ENCODE measurements at regions of chr1 and their contacts with region 1.

Region 1: GRCh38 chr1:154992721-154993571 is 440 bp upstream of the LENEP start:
- DNase-seq: no peak
- H3K4me3 ChIP-seq: no peak overlapping the region
- H3K4me3 Mint-ChIP-seq: no peak overlapping the region
- H3K27ac ChIP-seq: no peak overlapping the region
- H3K27ac Mint-ChIP-seq: peak overlapping the region in 1 of 7 donors; percentile 47
- H3K4me1 ChIP-seq: peaks cover 24% of the 10 kb centered on the region
- H3K4me1 Mint-ChIP-seq: peaks cover 14 to 32% (median 23%) of the 10 kb centered on the region in 4 donors
- H3K27me3 ChIP-seq: no peaks in the 10 kb centered on the region
- H3K27me3 Mint-ChIP-seq: no peaks in the 10 kb centered on the region

Region 2: GRCh38 chr1:154961497-154962262 is 31.3 kb before region 1 on chr1 and contains the start of gene PYGO2:
- CTCF ChIA-PET with region 1: interaction called, 11 read pairs
- POLR2A ChIA-PET with region 1: interaction called, 1,543 read pairs
- intact Hi-C with region 1: no loop called
- DNase-seq: peak; percentile 81 to 88 (median 82)
- H3K4me3 ChIP-seq: peak within 1 kb of the TSS; percentile 63 to 65
- H3K4me3 Mint-ChIP-seq: peak within 1 kb of the TSS; percentile 94 to 98 (median 97)
- H3K27ac ChIP-seq: peak within 1 kb of the TSS; percentile 84
- H3K27ac Mint-ChIP-seq: peak within 1 kb of the TSS; percentile 97 to 99 (median 98)
- H3K4me1 ChIP-seq: peaks cover 43% of the 10 kb centered on the region
- H3K4me1 Mint-ChIP-seq: peaks cover 21 to 57% (median 37%) of the 10 kb centered on the region in 4 donors
- H3K27me3 ChIP-seq: no peaks in the 10 kb centered on the region
- H3K27me3 Mint-ChIP-seq: no peaks in the 10 kb centered on the region
- total RNA-seq, gene PYGO2: 78.4 to 80.2 TPM

Region 3: GRCh38 chr1:155307247-155307740 is 314.3 kb after region 1 on chr1:
- CTCF ChIA-PET with region 1: no interaction called
- POLR2A ChIA-PET with region 1: no interaction called
- intact Hi-C with region 1: no loop called
- DNase-seq: no peak
- H3K4me3 ChIP-seq: no peak overlapping the region
- H3K4me3 Mint-ChIP-seq: peak overlapping the region in 3 of 8 donors; percentile 25 to 99 (median 48)
- H3K27ac ChIP-seq: peak overlapping the region; percentile 90
- H3K27ac Mint-ChIP-seq: peak overlapping the region; percentile 54 to 96 (median 83)
- H3K4me1 ChIP-seq: peaks cover 22% of the 10 kb centered on the region
- H3K4me1 Mint-ChIP-seq: peaks cover 16 to 35% (median 23%) of the 10 kb centered on the region in 4 donors
- H3K27me3 ChIP-seq: no peaks in the 10 kb centered on the region
- H3K27me3 Mint-ChIP-seq: peaks cover 0 to 3% of the 10 kb centered on the region in 2 donors

Measured in CD4-positive, alpha-beta memory T cell (primary cell).